Activated B cell treated with CpG ODN at 0.5 μM for 24 hours (primary cell): ENCODE measurements at regions of chr20 and their contacts with region 1.

Region 1: DNA sequence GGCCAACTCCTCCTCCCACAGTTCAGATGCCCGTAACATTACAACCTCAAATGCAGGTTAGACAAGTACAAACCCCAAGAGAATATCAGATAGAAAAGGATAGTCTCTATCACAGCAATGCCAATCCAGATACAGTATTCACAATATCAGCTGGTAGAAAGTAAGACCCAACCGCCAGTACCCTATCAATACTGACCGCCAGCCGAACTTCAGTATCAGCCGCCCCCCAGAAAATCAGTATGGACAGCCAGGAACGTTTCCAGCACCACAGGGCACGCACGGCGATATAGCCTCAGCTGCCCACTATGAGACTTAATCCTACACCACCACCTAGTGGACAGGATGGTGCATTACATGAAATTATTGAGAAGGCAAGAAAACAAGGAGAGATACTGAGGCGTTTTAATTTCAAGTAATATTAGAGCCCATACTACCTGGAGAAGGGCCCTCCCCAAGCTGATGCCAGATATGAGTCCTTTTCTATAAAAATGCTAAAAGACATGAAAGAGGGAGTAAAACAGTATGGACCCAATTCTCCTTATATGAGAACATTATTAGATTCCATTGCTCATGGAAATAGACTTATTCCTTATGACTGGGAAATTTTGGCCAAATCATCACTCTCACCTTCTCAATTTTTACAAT is 17.6 kb upstream of the EIF2S2 start:
- DNase-seq: peak; percentile 32
- ATAC-seq: peak; percentile 95
- H3K4me3 Mint-ChIP-seq: peak overlapping the region; percentile 3
- H3K27ac Mint-ChIP-seq: no peak overlapping the region
- H3K4me1 Mint-ChIP-seq: peaks cover 5% of the 10 kb centered on the region
- H3K27me3 Mint-ChIP-seq: peaks cover 11% of the 10 kb centered on the region
- CTCF ChIP-seq: no peak

Region 2: GRCh38 chr20:33773412-33774089 is 356.1 kb before region 1 on chr20:
- CTCF ChIA-PET with region 1: no interaction called
- POLR2A ChIA-PET with region 1: no interaction called
- intact Hi-C with region 1: loop called (anchors 1 kb)
- DNase-seq: no peak
- ATAC-seq: peak; percentile 65
- H3K4me3 Mint-ChIP-seq: peak overlapping the region; percentile 41
- H3K27ac Mint-ChIP-seq: peak overlapping the region; percentile 93
- H3K4me1 Mint-ChIP-seq: peaks cover 64% of the 10 kb centered on the region
- H3K27me3 Mint-ChIP-seq: no peaks in the 10 kb centered on the region
- CTCF ChIP-seq: no peak

Region 3: DNA sequence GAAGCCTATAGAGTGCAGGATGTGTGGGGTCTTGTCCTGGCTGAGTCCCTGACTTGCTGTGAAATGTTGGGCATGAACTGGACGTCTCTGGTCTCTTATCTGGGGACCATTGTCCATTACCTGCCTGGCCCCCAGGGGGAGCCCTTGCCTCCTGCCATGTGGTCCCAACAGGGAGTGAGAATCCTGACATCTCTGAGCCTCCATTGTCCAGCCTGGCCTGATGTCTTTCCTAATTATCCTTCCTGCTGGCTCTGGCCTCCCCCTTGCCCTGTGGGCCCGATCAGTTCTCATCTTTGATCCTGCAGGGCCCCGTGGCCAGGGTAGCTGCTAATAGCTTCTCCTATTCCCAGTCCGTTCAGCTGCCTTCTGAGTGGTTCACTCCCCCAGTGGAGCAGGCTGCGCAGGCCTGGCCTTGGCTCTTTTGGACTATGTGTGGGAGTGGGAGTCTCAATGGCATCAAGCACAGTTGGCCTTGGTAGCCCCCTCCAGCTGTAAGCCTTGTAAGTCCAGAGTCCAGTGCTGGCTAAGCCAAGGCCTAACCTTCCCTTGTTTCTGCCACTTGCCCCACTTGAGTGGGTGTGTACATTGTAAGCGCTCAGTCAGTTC is 213.8 kb before region 1 on chr20:
- CTCF ChIA-PET with region 1: interaction called, 5 read pairs
- POLR2A ChIA-PET with region 1: no interaction called
- intact Hi-C with region 1: loop called (anchors 1 kb)
- DNase-seq: peak; percentile 38
- ATAC-seq: peak; percentile 52
- H3K4me3 Mint-ChIP-seq: no peak overlapping the region
- H3K27ac Mint-ChIP-seq: no peak overlapping the region
- H3K4me1 Mint-ChIP-seq: peaks cover 15% of the 10 kb centered on the region
- H3K27me3 Mint-ChIP-seq: no peaks in the 10 kb centered on the region
- CTCF ChIP-seq: no peak

Region 4: GRCh38 chr20:34022154-34022838 is 107.3 kb before region 1 on chr20:
- CTCF ChIA-PET with region 1: no interaction called
- POLR2A ChIA-PET with region 1: no interaction called
- intact Hi-C with region 1: loop called (anchors 5 kb)
- DNase-seq: no peak
- ATAC-seq: peak; percentile 76
- H3K4me3 Mint-ChIP-seq: peak overlapping the region; percentile 16
- H3K27ac Mint-ChIP-seq: peak overlapping the region; percentile 69
- H3K4me1 Mint-ChIP-seq: peaks cover 83% of the 10 kb centered on the region
- H3K27me3 Mint-ChIP-seq: no peaks in the 10 kb centered on the region
- CTCF ChIP-seq: no peak

Region 5: DNA sequence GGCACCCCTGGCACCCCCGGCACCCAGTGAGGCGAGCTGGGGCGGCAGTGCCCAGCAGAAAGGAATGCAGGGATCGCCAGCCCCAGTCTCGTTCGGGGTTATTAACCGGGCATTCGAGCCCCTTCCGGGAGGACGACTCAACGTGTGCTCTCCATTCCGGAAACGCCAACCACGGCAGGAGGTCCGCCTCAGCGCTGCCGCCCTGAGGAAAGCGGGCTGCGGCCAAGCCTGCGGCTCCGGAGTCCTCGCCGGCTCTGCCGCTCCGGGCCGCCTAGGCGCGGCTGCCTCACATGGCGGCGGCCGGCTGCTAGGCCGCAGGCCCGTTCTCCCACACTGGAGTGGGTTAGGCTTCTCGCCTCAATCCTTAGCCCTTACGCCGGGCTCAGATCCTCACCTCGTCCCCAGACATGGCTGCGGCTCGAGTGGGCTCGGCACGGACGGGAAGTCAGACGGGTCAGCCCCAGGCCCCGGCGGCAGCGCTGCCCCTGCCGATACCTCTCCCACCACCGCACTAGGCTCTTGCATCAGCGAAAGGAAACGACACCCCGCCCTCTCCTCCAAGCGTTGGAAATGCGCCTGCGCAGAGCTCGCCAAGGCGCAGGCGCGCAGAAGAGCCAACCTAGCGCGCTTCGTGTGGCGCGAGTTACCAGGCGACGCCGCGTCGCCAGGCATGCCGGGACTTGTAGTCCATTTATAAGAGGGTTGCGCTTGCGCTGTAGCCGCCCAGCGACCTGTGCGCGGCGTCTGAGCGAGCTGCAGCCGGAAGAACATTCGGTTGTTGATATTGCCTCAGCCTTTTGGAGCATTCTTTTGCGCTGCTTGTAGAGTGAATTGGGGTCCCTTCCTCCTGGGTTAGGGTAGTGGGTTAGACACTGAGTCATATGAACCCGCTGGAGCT is 17.7 kb before region 1 on chr20 and contains the start of gene EIF2S2:
- CTCF ChIA-PET with region 1: interaction called, 4 read pairs
- POLR2A ChIA-PET with region 1: interaction called, 18 read pairs
- intact Hi-C with region 1: loop called (anchors 1 kb)
- DNase-seq: peak; percentile 87
- ATAC-seq: peak; percentile 84
- H3K4me3 Mint-ChIP-seq: peak within 1 kb of the TSS; percentile 96
- H3K27ac Mint-ChIP-seq: peak within 1 kb of the TSS; percentile 98
- H3K4me1 Mint-ChIP-seq: peaks cover 49% of the 10 kb centered on the region
- H3K27me3 Mint-ChIP-seq: no peaks in the 10 kb centered on the region
- CTCF ChIP-seq: no peak
- total RNA-seq, gene EIF2S2: 58.3 and 62.2 TPM in 2 replicates